ENCODE measurements at regions of chr4 and their contacts with region 1.

Region 1: DNA sequence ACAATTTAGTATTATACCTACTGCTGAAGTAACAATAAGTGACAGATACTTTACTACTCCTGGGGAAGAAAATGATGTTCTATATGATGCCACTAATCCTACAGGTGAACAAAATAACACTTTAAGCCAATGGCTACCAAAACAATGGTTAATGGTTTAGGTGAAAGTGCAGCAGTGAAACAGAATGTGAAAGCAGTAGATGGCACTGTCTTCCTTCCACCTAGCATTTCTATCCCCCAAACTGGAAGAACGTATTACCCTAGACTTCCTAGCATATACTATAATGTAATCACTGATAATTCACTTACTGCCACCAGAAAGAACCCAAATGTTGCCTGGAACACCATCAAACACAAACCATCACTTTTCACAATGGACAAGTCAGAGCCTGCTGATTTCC is 18.9 kb upstream of the CABS1 start:
- DNase-seq: no peak
- H3K4me3 ChIP-seq: no peak overlapping the region
- H3K27ac ChIP-seq: no peak overlapping the region
- H3K4me1 ChIP-seq: no peaks in the 10 kb centered on the region
- CTCF ChIP-seq: 0 out of 2 replicates have a peak, but pooled peaks have one; percentile 24

Region 2: GRCh38 chr4:69799337-69799736 is 516.6 kb before region 1 on chr4:
- CTCF ChIA-PET with region 1: no interaction called
- POLR2A ChIA-PET with region 1: no interaction called
- intact Hi-C with region 1: no loop called
- DNase-seq: no peak
- H3K4me3 ChIP-seq: no peak overlapping the region
- H3K27ac ChIP-seq: no peak overlapping the region
- H3K4me1 ChIP-seq: no peaks in the 10 kb centered on the region
- CTCF ChIP-seq: no peak

Region 3: DNA sequence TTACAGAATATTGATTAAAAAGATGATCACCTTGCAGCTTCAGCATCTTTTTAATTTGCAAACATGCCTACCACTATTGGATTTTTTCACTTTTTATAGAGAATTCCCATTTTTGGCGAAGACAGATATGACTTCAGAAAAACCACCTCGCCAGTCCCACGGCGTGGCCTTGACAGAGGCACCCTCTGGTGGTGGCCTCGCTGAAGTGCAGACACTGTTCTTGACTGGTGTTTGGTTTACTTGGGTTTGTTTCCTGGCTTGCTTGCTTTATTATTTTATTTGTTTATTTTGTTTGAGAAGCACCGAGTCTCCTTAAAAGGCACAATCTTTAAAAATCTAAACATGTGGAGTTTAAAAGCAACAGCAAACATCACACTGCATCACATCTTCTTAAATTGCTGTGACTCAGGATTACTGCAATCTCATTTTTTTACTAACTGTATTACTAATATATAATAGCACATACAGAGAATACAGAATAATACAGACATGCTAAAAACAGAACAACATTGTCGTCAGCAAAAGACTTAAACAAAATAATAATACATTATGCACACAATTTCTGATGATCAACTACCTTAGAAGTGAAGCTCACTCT is 189.3 kb after region 1 on chr4:
- CTCF ChIA-PET with region 1: no interaction called
- POLR2A ChIA-PET with region 1: interaction called, 3 read pairs
- intact Hi-C with region 1: loop called (anchors 10 kb)
- DNase-seq: peak; percentile 59
- H3K4me3 ChIP-seq: no peak overlapping the region
- H3K27ac ChIP-seq: no peak overlapping the region
- H3K4me1 ChIP-seq: no peaks in the 10 kb centered on the region
- CTCF ChIP-seq: peak; percentile 98

Region 4: DNA sequence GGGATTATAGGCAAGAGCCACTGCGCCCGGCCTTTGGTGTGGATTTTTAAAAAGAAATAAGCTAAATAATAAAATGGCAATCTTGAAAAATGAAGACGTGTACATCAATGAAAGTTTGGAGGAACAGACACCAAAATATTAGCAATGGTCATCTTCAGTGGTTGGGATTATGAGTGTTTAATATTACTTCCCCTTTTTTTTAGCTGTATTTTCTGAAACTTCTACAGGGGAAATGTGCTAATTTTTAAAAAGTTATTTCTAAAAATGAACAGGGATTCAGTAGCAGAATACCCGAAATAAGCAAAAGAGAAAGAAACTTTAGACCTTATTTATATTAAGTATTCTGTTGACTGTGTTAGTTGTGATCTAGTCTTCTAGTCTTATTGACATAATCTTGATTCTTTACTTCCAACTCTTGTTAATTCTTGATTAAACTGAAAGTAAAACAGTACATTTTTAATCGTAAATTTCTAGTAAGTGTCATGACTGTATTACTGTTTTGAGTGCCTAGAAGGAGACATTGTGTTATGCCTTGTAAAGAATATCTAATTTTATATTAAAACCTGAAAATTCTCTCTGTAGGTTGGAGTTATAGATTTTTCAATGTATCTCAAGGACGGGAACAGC is 457.1 kb after region 1 on chr4:
- CTCF ChIA-PET with region 1: no interaction called
- POLR2A ChIA-PET with region 1: no interaction called
- intact Hi-C with region 1: no loop called
- DNase-seq: no peak
- H3K4me3 ChIP-seq: no peak overlapping the region
- H3K27ac ChIP-seq: no peak overlapping the region
- H3K4me1 ChIP-seq: peaks cover 11% of the 10 kb centered on the region
- CTCF ChIP-seq: no peak

Measured in OCI-LY7 (cell line).